Esophagus squamous epithelium (tissue), 5 donors: ENCODE measurements at regions of chr12 and their contacts with region 1.

Region 1: GRCh38 chr12:2583091-2583497 is 211.7 kb upstream of the FKBP4 start:
- DNase-seq: no peak
- H3K4me3 ChIP-seq: peak overlapping the region in 1 of 4 donors; percentile 41
- H3K27ac ChIP-seq: no peak overlapping the region
- H3K4me1 ChIP-seq: peaks cover 0 to 17% (median 6%) of the 10 kb centered on the region in 3 donors
- H3K27me3 ChIP-seq: peaks cover 0 to 46% (median 0%) of the 10 kb centered on the region in 4 donors
- CTCF ChIP-seq: peak; percentile 42 to 92 (median 84)
- POLR2A ChIP-seq: no peak

Region 2: GRCh38 chr12:2052826-2053674 is 530.0 kb before region 1 on chr12 and contains the start of gene CACNA1C:
- intact Hi-C with region 1: loop called (anchors 5 kb)
- DNase-seq: no peak
- H3K4me3 ChIP-seq: peak within 1 kb of the TSS; percentile 41 to 74 (median 52)
- H3K27ac ChIP-seq: peak within 1 kb of the TSS; percentile 40 to 89 (median 75)
- H3K4me1 ChIP-seq: peaks cover 0 to 42% (median 13%) of the 10 kb centered on the region in 3 donors
- H3K27me3 ChIP-seq: peaks cover 0 to 94% (median 0%) of the 10 kb centered on the region in 4 donors
- CTCF ChIP-seq: peak in 3 of 6 experiments; percentile 27 to 40 (median 30)
- POLR2A ChIP-seq: peak in 2 of 4 donors; percentile 45
- total RNA-seq, gene CACNA1C: 1.5 to 13.5 (median 2.1) TPM

Region 3: GRCh38 chr12:2550561-2551411 is 32.3 kb before region 1 on chr12:
- intact Hi-C with region 1: no loop called
- DNase-seq: no peak
- H3K4me3 ChIP-seq: no peak overlapping the region
- H3K27ac ChIP-seq: no peak overlapping the region
- H3K4me1 ChIP-seq: no peaks in the 10 kb centered on the region
- H3K27me3 ChIP-seq: no peaks in the 10 kb centered on the region
- CTCF ChIP-seq: no peak
- POLR2A ChIP-seq: no peak